Heart left ventricle (tissue), 16 donors: ENCODE measurements at regions of chr2 and their contacts with region 1.

Region 1: GRCh38 chr2:133844214-133844892 is 276.1 kb upstream of the NCKAP5 start:
- DNase-seq: peak in 4 of 5 donors; percentile 49 to 54 (median 49)
- ATAC-seq: peak; percentile 37 to 77 (median 68)
- H3K4me3 ChIP-seq: no peak overlapping the region
- H3K27ac ChIP-seq: no peak overlapping the region
- H3K4me1 ChIP-seq: peaks cover 0 to 22% (median 4%) of the 10 kb centered on the region in 12 donors
- H3K27me3 ChIP-seq: no peaks in the 10 kb centered on the region
- CTCF ChIP-seq: peak; percentile 75 to 87 (median 85)
- POLR2A ChIP-seq: no peak

Region 2: DNA sequence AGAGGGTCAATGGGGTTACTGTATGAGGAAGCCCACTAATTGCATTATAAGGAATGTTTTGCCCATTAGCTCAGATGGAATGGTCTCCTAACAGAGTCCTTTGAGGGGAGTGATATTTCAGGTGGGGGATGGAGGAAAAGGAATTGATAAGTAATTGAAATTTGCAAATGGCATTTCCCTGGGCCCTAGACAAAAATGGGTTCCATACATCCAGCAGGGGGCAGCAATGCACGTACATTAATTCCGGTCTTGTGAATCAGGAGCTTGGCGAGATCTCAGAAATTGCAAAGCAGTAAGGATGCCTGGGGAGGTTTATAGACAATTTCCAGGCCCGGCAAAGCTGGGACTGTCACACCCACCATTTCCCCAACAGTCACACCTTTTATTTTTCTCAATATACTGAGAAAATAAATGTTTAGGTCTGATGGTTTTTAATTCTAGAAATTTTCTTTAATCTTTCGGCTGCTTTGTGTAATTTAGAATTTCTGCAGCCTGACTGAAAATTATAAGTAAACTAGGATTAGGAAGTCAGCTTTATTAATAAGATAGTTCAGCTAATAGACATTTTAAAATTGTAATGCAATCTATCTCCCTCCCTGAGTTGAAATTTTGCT is 1297.2 kb before region 1 on chr2:
- intact Hi-C with region 1: loop called (anchors 2 to 5 kb)
- DNase-seq: peak in 4 of 5 donors; percentile 48 to 74 (median 52)
- ATAC-seq: peak in 1 of 4 donors; percentile 51
- H3K4me3 ChIP-seq: no peak overlapping the region
- H3K27ac ChIP-seq: no peak overlapping the region
- H3K4me1 ChIP-seq: no peaks in the 10 kb centered on the region
- H3K27me3 ChIP-seq: peaks cover 0 to 8% (median 0%) of the 10 kb centered on the region in 9 donors
- CTCF ChIP-seq: peak; percentile 53 to 76 (median 64)
- POLR2A ChIP-seq: no peak

Region 3: DNA sequence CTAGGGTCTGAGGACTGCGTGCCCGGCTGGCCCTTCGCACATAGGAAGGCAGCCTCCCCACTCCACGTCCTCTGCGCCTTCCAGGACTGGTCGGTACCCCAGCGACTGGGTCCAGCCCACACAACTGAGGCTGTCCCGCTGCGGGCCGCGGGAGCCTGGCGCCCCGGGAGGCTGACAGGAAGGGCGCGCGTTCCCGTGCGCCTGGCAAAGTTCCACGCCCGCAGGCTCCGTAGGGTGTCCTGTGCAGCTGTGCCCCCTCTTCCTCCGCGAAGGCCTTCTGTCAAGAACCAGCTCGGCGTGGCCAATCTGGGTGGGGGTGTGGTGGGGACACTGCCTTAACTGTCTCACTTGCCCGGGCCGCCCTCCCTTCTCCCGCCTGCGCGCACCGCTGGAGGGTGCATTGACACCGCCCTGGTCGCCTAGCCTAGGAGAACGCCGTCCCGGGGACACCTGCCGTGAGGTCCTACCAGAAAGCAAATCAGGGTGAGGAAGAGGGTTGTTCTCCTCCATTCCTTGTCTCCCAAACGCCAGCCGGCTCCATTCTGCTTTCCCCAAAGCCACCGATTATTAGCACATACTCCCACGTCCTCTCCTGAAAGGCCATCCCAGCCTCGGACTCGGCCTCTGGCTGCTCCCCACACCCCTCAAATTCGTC is 1173.7 kb before region 1 on chr2:
- intact Hi-C with region 1: loop called in 1 of 10 experiments (anchors 10 kb)
- DNase-seq: peak in 4 of 5 donors; percentile 10 to 36 (median 26)
- ATAC-seq: peak in 3 of 4 donors; percentile 69 to 75 (median 70)
- H3K4me3 ChIP-seq: peak overlapping the region; percentile 28 to 63 (median 52)
- H3K27ac ChIP-seq: no peak overlapping the region
- H3K4me1 ChIP-seq: peaks cover 0 to 33% (median 17%) of the 10 kb centered on the region in 12 donors
- H3K27me3 ChIP-seq: peaks cover 15 to 58% (median 43%) of the 10 kb centered on the region in 9 donors
- CTCF ChIP-seq: peak in 1 of 12 donors; percentile 7
- POLR2A ChIP-seq: no peak

Region 4: GRCh38 chr2:133266041-133266925 is 578.1 kb before region 1 on chr2:
- intact Hi-C with region 1: loop called in 1 of 10 experiments (anchors 10 kb)
- DNase-seq: peak in 1 of 5 donors; percentile 38
- ATAC-seq: peak; percentile 36 to 57 (median 50)
- H3K4me3 ChIP-seq: peak overlapping the region; percentile 26 to 60 (median 48)
- H3K27ac ChIP-seq: peak overlapping the region in 4 of 12 donors; percentile 15 to 46 (median 40)
- H3K4me1 ChIP-seq: peaks cover 0 to 27% (median 0%) of the 10 kb centered on the region in 12 donors
- H3K27me3 ChIP-seq: peaks cover 0 to 10% (median 0%) of the 10 kb centered on the region in 9 donors
- CTCF ChIP-seq: no peak
- POLR2A ChIP-seq: no peak

Region 5: GRCh38 chr2:133579274-133579673 is 265.1 kb before region 1 on chr2:
- intact Hi-C with region 1: loop called in 1 of 10 experiments (anchors 5 kb)
- DNase-seq: peak; percentile 46 to 72 (median 66)
- ATAC-seq: peak; percentile 63 to 94 (median 90)
- H3K4me3 ChIP-seq: no peak overlapping the region
- H3K27ac ChIP-seq: peak overlapping the region in 7 of 12 donors; percentile 7 to 72 (median 49)
- H3K4me1 ChIP-seq: peaks cover 0 to 27% (median 13%) of the 10 kb centered on the region in 12 donors
- H3K27me3 ChIP-seq: no peaks in the 10 kb centered on the region
- CTCF ChIP-seq: no peak
- POLR2A ChIP-seq: no peak